Uterus (tissue), 4 donors: ENCODE measurements at regions of chr12 and their contacts with region 1.

Region 1: DNA sequence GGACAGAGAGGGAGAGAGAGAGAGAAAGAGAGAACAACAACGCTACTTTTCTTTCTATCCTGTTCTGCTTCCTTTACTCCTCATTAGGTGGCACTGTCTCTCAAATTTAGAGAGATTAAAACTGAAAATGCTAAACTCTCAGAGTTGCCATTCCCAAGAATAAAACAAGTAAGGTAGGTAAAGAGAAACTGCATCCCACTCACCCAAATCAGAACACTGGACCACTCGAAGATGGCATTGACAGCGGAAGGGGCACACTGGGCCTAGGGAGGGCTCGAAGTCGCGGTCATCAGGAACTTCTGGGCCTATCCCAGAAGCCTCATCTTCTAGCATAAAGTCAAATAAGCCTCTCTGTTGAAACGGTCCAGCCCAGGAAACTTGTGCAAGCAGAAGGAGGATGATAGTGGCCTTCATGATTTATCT is 4.5 kb downstream of the DCN start:
- DNase-seq: peak; percentile 43 to 59
- H3K4me3 ChIP-seq: peak overlapping the region; percentile 36 to 52
- H3K27ac ChIP-seq: peak overlapping the region; percentile 87 to 97
- H3K4me1 ChIP-seq: no peaks in the 10 kb centered on the region
- H3K27me3 ChIP-seq: no peaks in the 10 kb centered on the region
- CTCF ChIP-seq: peak; percentile 49 to 69 (median 60)
- POLR2A ChIP-seq: no peak

Region 2: GRCh38 chr12:91250273-91250665 is 72.1 kb after region 1 on chr12:
- intact Hi-C with region 1: no loop called
- DNase-seq: peak in 1 of 2 donors; percentile 43
- H3K4me3 ChIP-seq: no peak overlapping the region
- H3K27ac ChIP-seq: peak overlapping the region; percentile 81 to 87
- H3K4me1 ChIP-seq: peaks cover 0 to 16% of the 10 kb centered on the region in 2 donors
- H3K27me3 ChIP-seq: no peaks in the 10 kb centered on the region
- CTCF ChIP-seq: no peak
- POLR2A ChIP-seq: no peak

Region 3: GRCh38 chr12:91326058-91327027 is 148.2 kb after region 1 on chr12:
- intact Hi-C with region 1: loop called (anchors 5 kb)
- DNase-seq: peak; percentile 36 to 78
- H3K4me3 ChIP-seq: peak overlapping the region in 1 of 2 donors; percentile 13
- H3K27ac ChIP-seq: peak overlapping the region; percentile 81 to 87
- H3K4me1 ChIP-seq: no peaks in the 10 kb centered on the region
- H3K27me3 ChIP-seq: no peaks in the 10 kb centered on the region
- CTCF ChIP-seq: peak; percentile 68 to 82 (median 79)
- POLR2A ChIP-seq: no peak